ENCODE measurements at regions of chr1 and their contacts with region 1.

Region 1: GRCh38 chr1:30911046-30911954 is 2.7 kb upstream of the SDC3 start:
- DNase-seq: no peak
- H3K4me3 ChIP-seq: no peak overlapping the region
- H3K27me3 ChIP-seq: no peaks in the 10 kb centered on the region
- CTCF ChIP-seq: peak; percentile 88

Region 2: DNA sequence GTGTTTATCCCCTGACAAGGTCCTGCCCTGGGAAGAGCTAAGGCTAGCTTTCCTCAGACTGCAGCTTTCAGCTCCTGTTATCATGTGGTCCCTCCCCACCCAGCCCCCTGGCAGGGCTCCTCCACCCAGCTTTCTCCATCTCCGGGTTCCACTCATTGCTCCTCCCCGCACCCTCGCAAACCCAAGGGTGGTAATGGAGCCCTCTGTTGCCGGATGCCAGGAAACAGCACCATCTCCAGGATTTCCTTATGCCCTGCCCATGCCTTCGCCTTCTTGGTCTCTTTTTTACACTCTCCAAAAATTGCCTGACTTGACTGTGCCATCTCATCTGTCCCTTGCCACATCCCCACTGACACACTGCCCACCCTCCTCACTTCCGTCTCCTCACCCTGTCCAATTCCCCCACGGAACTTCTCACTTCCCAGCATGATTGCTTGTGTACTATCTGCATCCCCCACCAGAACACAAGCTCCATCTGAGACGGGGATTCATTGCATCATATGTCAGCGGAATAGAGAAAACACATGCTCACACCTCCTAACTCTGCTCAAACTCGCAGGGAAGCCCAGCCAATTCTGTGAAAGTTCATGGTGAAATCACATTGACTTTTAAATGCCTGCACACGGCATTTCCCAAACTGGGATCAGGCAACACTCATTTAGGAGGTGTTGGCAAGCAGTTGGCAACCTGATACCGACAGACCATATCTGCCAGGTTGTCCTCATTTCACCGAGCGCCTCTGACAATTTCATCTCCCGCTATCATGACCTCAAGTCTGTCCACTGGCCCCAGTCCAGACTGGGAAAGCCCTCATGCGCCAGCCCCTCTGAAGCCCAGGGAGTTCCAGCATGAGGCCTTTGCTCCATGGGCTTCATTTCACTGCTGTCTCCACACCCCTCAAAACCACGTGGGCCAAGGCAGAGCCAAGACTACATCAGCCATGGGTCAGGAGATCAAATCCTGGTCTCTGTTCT is 389.0 kb before region 1 on chr1:
- CTCF ChIA-PET with region 1: no interaction called
- POLR2A ChIA-PET with region 1: no interaction called
- DNase-seq: peak; percentile 83
- H3K4me3 ChIP-seq: no peak overlapping the region
- H3K27me3 ChIP-seq: no peaks in the 10 kb centered on the region
- CTCF ChIP-seq: peak; percentile 31; the same call in 1 of the 2 replicates

Region 3: GRCh38 chr1:30790850-30791778 is 120.2 kb before region 1 on chr1:
- CTCF ChIA-PET with region 1: interaction called, 548 read pairs
- POLR2A ChIA-PET with region 1: no interaction called
- DNase-seq: no peak
- H3K4me3 ChIP-seq: no peak overlapping the region
- H3K27me3 ChIP-seq: peaks cover 7% of the 10 kb centered on the region
- CTCF ChIP-seq: no peak

Region 4: GRCh38 chr1:30816211-30817076 is 94.9 kb before region 1 on chr1:
- CTCF ChIA-PET with region 1: interaction called, 548 read pairs
- POLR2A ChIA-PET with region 1: no interaction called
- DNase-seq: peak; percentile 77
- H3K4me3 ChIP-seq: no peak overlapping the region
- H3K27me3 ChIP-seq: no peaks in the 10 kb centered on the region
- CTCF ChIP-seq: no peak

Region 5: DNA sequence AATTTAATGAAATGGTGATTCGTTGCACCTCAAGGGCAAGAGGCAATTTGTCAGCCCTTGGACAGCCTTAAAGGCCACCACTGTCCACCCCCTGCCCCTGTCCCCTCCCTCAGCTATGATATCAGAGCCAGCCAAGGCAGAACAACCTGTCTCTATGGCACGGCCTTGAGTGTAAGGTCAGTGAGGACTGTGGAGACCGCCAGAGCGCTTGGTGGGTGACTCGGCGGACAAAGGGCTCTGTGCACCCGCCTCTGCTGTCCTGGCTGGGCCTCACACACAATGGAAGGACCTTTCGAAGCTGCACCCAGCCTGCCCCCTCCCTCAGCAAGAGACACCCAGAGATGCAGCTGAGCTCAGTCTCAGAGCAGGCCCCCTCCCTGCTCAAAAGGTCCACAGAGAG is 53.3 kb before region 1 on chr1:
- CTCF ChIA-PET with region 1: interaction called, 13 read pairs
- POLR2A ChIA-PET with region 1: no interaction called
- DNase-seq: no peak
- H3K4me3 ChIP-seq: no peak overlapping the region
- H3K27me3 ChIP-seq: no peaks in the 10 kb centered on the region
- CTCF ChIP-seq: no peak

Region 6: GRCh38 chr1:30929135-30929889 is 18.0 kb after region 1 on chr1:
- CTCF ChIA-PET with region 1: interaction called, 13 read pairs
- POLR2A ChIA-PET with region 1: no interaction called
- DNase-seq: no peak
- H3K4me3 ChIP-seq: no peak overlapping the region
- H3K27me3 ChIP-seq: no peaks in the 10 kb centered on the region
- CTCF ChIP-seq: peak; percentile 74

Region 7: GRCh38 chr1:30952098-30952497 is 40.8 kb after region 1 on chr1:
- CTCF ChIA-PET with region 1: no interaction called
- POLR2A ChIA-PET with region 1: no interaction called
- DNase-seq: no peak
- H3K4me3 ChIP-seq: no peak overlapping the region
- H3K27me3 ChIP-seq: no peaks in the 10 kb centered on the region
- CTCF ChIP-seq: no peak

Measured in BJ (cell line).